ENCODE measurements at regions of chr13 and their contacts with region 1.

Region 1: DNA sequence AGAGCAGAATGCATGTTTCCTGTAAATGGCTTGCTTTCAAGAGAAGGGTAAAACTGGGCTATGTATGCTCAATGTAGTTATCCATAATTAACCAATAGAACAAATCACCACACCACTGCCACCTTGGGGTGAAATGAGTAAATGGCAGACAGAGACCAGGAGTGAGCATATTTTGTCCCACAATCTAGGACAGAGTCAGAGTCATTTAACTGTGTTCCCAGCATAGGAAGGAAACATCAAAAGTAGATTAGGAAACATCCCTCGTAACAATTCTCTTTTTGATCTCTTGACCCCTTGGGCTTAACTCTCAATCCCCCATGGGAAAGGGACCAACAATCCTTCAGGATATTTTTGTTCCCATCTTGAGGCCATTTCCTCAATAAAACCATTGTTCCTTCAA is 224.8 kb downstream of the NHLRC3 start:
- DNase-seq: peak in 1 of 3 donors; percentile 48
- ATAC-seq: peak; percentile 79 to 88
- H3K4me3 ChIP-seq: no peak overlapping the region
- H3K27ac ChIP-seq: peak overlapping the region; percentile 80
- H3K4me1 ChIP-seq: peaks cover 6% of the 10 kb centered on the region
- H3K27me3 ChIP-seq: no peaks in the 10 kb centered on the region

Region 2: DNA sequence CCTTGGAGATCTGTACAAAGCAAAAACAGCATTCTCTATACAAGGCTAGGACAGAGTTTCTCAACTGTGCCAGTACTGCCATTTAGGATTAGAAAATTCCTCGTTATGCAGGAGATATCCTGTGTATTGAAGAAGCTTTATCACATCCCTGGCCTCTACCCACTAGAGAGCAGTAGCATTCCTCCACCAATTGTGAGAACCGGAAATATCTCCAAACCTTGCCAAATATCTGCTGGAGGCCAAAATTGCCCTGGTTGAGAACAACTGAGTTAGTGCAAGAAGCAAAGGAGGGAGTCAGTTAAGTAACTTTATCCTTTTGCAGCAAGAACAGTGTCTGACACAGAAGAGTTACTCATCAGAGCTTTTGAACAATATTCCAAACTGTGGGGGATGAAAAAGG is 592.4 kb before region 1 on chr13:
- intact Hi-C with region 1: no loop called
- DNase-seq: no peak
- ATAC-seq: no peak
- H3K4me3 ChIP-seq: no peak overlapping the region
- H3K27ac ChIP-seq: no peak overlapping the region
- H3K4me1 ChIP-seq: no peaks in the 10 kb centered on the region
- H3K27me3 ChIP-seq: no peaks in the 10 kb centered on the region

Region 3: DNA sequence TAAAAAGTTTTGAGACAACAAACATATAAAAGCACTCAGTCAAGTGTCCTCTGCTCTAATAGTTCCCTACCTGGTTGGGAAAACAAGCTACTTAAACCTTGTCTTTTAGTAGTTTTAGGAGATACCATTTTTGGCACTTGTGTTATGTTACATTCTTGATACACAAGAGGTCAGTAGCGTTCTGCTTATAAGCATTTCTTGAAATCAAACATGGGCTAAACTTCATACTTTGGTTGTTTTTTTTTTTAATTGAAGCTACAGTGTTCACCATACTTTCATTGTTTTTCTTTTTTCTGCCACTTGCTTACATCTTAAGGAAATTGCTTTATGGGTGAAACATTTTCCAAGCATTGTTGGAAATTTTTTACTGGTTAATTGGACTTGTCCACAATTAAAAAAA is 211.9 kb before region 1 on chr13:
- intact Hi-C with region 1: loop called in 1 of 4 experiments (anchors 10 kb)
- DNase-seq: no peak
- ATAC-seq: no peak
- H3K4me3 ChIP-seq: no peak overlapping the region
- H3K27ac ChIP-seq: no peak overlapping the region
- H3K4me1 ChIP-seq: no peaks in the 10 kb centered on the region
- H3K27me3 ChIP-seq: no peaks in the 10 kb centered on the region

Region 4: DNA sequence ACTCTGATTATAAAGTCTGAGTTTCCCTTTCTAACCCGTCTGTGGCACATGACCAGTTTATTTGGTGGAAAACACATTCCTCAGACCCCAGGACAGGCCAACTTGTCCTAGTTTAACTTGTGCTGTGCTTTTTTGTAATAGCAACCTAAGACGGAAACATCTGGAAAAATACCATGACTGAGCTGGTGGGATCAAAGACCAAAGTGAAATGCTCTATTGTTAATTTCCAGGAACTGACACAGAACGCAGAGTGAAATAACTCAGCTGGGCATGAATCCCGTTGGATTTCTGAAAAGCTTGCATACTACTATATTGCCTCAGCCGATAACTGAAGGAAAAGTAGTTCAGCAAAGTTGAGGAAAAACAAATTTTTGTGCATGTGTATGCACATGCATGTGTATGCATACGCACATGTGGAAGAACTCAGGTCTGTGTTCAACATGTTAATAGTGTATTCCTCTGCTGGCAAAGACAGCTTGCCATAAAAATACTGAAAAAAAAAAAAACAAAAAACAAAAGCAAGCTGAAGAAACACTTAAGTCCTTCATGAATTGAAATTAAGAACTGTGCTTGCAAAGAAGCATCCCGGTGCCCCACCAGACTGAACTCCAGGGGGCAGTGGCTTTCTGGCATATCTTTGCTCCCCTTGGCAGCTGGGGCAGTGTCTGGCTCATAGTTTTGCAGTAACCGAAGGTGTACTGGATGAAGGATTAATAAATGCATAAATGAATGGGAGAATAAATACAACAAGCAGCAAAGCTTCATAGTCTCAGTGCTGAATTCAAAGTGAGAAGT is 152.2 kb after region 1 on chr13:
- intact Hi-C with region 1: loop called in 1 of 4 experiments (anchors 10 kb)
- DNase-seq: peak; percentile 49 to 77 (median 73)
- ATAC-seq: peak; percentile 67 to 88
- H3K4me3 ChIP-seq: peak overlapping the region; percentile 32
- H3K27ac ChIP-seq: peak overlapping the region; percentile 58
- H3K4me1 ChIP-seq: peaks cover 11% of the 10 kb centered on the region
- H3K27me3 ChIP-seq: no peaks in the 10 kb centered on the region

Measured in right cardiac atrium (tissue), 5 donors.